Activated B cell treated with CpG ODN at 0.5 μM for 24 hours (primary cell): ENCODE measurements at regions of chr2 and their contacts with region 1.

Region 1: GRCh38 chr2:230306474-230306873 is 20.5 kb upstream of the SP140L start:
- DNase-seq: no peak
- ATAC-seq: no peak
- H3K4me3 Mint-ChIP-seq: no peak overlapping the region
- H3K27ac Mint-ChIP-seq: no peak overlapping the region
- H3K4me1 Mint-ChIP-seq: peaks cover 22% of the 10 kb centered on the region
- H3K27me3 Mint-ChIP-seq: no peaks in the 10 kb centered on the region
- CTCF ChIP-seq: no peak

Region 2: GRCh38 chr2:230286048-230286447 is 20.4 kb before region 1 on chr2:
- CTCF ChIA-PET with region 1: no interaction called
- POLR2A ChIA-PET with region 1: no interaction called
- intact Hi-C with region 1: no loop called
- DNase-seq: no peak
- ATAC-seq: no peak
- H3K4me3 Mint-ChIP-seq: no peak overlapping the region
- H3K27ac Mint-ChIP-seq: peak overlapping the region; percentile 61
- H3K4me1 Mint-ChIP-seq: peaks cover 7% of the 10 kb centered on the region
- H3K27me3 Mint-ChIP-seq: no peaks in the 10 kb centered on the region
- CTCF ChIP-seq: no peak

Region 3: DNA sequence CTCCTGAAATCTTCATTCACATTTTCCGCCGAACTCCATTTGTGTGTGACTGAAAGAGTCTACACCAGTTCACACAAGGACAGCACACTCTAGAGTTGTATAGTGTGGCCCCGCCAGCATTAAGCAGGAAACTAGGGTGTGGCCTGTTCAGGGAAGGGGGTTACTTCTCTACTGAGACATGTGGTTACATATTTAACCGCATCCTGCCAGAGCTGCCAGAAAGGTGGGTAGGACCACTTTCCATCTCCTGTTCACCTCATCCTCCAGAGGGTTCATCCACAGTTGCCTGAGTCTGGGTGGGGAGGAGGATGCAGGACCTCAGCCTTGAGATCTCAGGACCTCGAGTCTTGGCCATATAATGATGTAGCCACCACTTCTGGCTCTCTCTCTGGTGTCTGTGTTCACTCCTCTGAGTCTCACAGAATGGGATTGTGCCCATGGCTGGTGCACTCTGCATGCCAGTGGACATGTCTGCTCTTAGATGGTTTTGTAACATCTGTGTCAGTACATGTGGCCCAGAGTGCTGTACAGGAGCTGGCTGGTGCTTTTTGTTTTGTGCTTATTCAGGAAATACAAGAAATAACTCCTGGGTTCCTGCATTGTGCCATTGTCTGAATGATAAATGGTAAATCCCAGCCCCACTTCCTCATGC is 12.9 kb after region 1 on chr2:
- CTCF ChIA-PET with region 1: no interaction called
- POLR2A ChIA-PET with region 1: no interaction called
- intact Hi-C with region 1: loop called (anchors 2 kb)
- DNase-seq: no peak
- ATAC-seq: peak; percentile 86
- H3K4me3 Mint-ChIP-seq: peak overlapping the region; percentile 56
- H3K27ac Mint-ChIP-seq: peak overlapping the region; percentile 90
- H3K4me1 Mint-ChIP-seq: peaks cover 78% of the 10 kb centered on the region
- H3K27me3 Mint-ChIP-seq: no peaks in the 10 kb centered on the region
- CTCF ChIP-seq: no peak